ENCODE measurements at regions of chr9 and their contacts with region 1.

Region 1: DNA sequence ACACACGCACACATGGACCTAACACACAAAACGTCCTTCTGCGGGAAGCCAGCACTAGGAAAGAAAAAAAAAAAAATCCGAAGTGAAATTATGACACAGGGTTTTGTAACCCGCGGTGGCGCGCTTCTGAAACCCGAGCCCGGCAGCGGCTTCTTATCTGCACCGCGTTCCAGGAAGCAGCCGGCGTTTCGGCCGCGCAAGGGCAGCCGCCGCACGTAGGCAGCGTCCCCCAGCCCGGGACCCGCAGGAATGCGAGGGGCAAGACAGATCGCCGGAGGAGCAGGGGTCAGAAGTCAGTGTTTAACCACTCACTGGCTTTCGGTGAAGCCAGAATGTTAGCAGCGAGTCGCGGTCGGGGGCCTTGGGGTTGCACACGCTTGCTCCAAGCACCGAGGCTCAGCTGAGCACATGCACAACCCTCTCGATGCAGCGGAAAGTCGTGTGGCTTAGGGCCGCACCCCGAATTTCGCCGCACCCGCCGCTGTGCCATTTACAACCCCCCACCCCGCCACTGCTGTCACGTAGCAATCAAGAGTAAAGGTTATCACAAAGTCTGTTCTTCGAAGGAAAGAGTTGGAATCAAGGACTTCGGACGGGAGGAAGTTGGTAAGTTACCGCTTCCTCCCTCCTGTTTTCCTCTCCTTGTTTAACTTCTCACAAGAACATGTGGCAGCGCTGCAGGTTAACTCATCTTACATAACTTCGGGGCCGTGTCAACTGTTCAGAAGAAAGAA is 167.9 kb downstream of the AUH start:
- DNase-seq: peak; percentile 93
- ATAC-seq: peak; percentile 82 to 85
- H3K4me3 ChIP-seq: peak overlapping the region; percentile 54
- H3K27ac ChIP-seq: peak overlapping the region; percentile 99
- H3K4me1 ChIP-seq: peaks cover 68% of the 10 kb centered on the region
- H3K27me3 ChIP-seq: no peaks in the 10 kb centered on the region
- CTCF ChIP-seq: no peak

Region 2: DNA sequence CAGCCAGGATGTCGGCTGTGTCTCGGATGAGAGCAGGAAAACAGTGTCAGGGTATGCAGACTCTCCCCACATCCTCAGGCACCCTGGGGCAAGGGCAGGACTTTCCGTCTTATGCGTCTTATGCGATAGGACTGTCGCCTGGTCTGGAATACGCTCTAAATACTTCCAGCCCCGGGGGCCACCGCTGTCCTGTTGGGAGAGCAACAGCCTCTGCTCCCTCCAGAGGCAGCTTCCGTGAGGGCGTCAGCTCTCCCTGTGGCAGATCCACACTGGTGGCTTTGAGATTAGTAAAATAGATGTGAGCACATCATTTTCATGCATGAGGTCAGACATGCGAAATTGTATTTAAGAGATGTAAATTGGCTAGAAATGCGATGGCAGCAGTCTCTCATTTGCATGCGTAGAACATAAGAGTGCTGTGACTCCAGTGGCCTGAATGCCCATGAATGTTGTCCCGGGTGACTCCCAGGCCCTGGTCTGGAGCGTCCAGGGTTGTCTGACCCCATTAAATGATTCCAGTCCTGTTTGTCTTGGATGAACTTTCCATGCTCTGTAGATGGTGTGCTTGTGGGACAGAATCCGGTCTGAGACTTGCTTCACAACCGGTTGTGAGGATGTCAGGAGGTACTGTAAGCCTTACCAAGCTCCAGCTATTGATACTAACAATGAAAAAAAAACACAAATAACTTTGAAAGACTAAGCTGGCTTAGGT is 164.0 kb before region 1 on chr9:
- intact Hi-C with region 1: no loop called
- DNase-seq: no peak
- ATAC-seq: no peak
- H3K4me3 ChIP-seq: no peak overlapping the region
- H3K27ac ChIP-seq: no peak overlapping the region
- H3K4me1 ChIP-seq: no peaks in the 10 kb centered on the region
- H3K27me3 ChIP-seq: no peaks in the 10 kb centered on the region
- CTCF ChIP-seq: no peak

Region 3: GRCh38 chr9:91422758-91423711 is 229.2 kb after region 1 on chr9:
- intact Hi-C with region 1: loop called (anchors 10 kb)
- DNase-seq: peak; percentile 74
- ATAC-seq: peak; percentile 2 to 13
- H3K4me3 ChIP-seq: peak overlapping the region; percentile 70
- H3K27ac ChIP-seq: peak overlapping the region; percentile 87
- H3K4me1 ChIP-seq: peaks cover 59% of the 10 kb centered on the region
- H3K27me3 ChIP-seq: no peaks in the 10 kb centered on the region
- CTCF ChIP-seq: peak; percentile 14

Measured in lower lobe of right lung (tissue), 2 donors.